CD8-positive, alpha-beta T cell (primary cell): ENCODE measurements at regions of chr5 and their contacts with region 1.

Region 1: GRCh38 chr5:160520609-160521391 is 99.1 kb downstream of the PTTG1 start:
- DNase-seq: no peak
- ATAC-seq: no peak
- H3K4me3 ChIP-seq: no peak overlapping the region
- H3K4me3 Mint-ChIP-seq: no peak overlapping the region
- H3K27ac ChIP-seq: no peak overlapping the region
- H3K27ac Mint-ChIP-seq: no peak overlapping the region
- H3K4me1 ChIP-seq: no peaks in the 10 kb centered on the region
- H3K4me1 Mint-ChIP-seq: no peaks in the 10 kb centered on the region
- H3K27me3 ChIP-seq: no peaks in the 10 kb centered on the region
- H3K27me3 Mint-ChIP-seq: no peaks in the 10 kb centered on the region
- CTCF ChIP-seq: no peak

Region 2: GRCh38 chr5:159489779-159490178 is 1031.0 kb before region 1 on chr5:
- CTCF ChIA-PET with region 1: no interaction called
- POLR2A ChIA-PET with region 1: no interaction called
- intact Hi-C with region 1: loop called in 1 of 2 experiments (anchors 10 kb)
- DNase-seq: no peak
- ATAC-seq: no peak
- H3K4me3 ChIP-seq: no peak overlapping the region
- H3K4me3 Mint-ChIP-seq: no peak overlapping the region
- H3K27ac ChIP-seq: no peak overlapping the region
- H3K27ac Mint-ChIP-seq: no peak overlapping the region
- H3K4me1 ChIP-seq: no peaks in the 10 kb centered on the region
- H3K4me1 Mint-ChIP-seq: no peaks in the 10 kb centered on the region
- H3K27me3 ChIP-seq: no peaks in the 10 kb centered on the region
- H3K27me3 Mint-ChIP-seq: no peaks in the 10 kb centered on the region
- CTCF ChIP-seq: no peak